CD14-positive monocyte (primary cell): ENCODE measurements at regions of chrX and their contacts with region 1.

Region 1: GRCh38 chrX:53631156-53631555 is 55.4 kb downstream of the HUWE1 start:
- DNase-seq: no peak
- H3K4me3 ChIP-seq: no peak overlapping the region
- H3K4me3 Mint-ChIP-seq: no peak overlapping the region
- H3K27ac ChIP-seq: no peak overlapping the region
- H3K27ac Mint-ChIP-seq: no peak overlapping the region
- H3K4me1 ChIP-seq: no peaks in the 10 kb centered on the region
- H3K4me1 Mint-ChIP-seq: no peaks in the 10 kb centered on the region
- H3K27me3 ChIP-seq: peaks cover 0 to 5% of the 10 kb centered on the region in 2 donors
- H3K27me3 Mint-ChIP-seq: peaks cover 0 to 3% (median 0%) of the 10 kb centered on the region in 3 donors
- CTCF ChIP-seq: no peak

Region 2: DNA sequence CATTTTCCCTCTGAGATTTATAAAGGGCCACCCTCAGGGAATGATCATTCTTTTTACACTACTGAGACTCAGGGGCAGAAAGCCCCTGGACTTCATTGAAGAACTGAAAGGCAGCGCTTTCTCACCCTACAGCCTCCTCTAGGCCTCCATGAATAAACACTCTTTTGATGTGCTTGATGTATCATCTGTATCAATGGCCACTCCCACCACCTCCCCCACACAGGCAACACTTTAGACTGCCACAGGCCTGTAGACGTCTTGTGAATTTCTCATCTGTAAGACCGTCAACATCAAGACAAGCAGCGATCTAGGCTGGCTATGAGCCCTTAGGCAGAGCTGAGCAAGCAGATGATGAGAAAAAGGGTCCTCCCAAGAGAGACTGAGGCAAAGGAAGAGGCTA is 67.8 kb before region 1 on chrX:
- intact Hi-C with region 1: loop called in 1 of 2 experiments (anchors 10 kb)
- DNase-seq: no peak
- H3K4me3 ChIP-seq: no peak overlapping the region
- H3K4me3 Mint-ChIP-seq: no peak overlapping the region
- H3K27ac ChIP-seq: no peak overlapping the region
- H3K27ac Mint-ChIP-seq: no peak overlapping the region
- H3K4me1 ChIP-seq: no peaks in the 10 kb centered on the region
- H3K4me1 Mint-ChIP-seq: no peaks in the 10 kb centered on the region
- H3K27me3 ChIP-seq: no peaks in the 10 kb centered on the region
- H3K27me3 Mint-ChIP-seq: peaks cover 0 to 12% (median 0%) of the 10 kb centered on the region in 3 donors
- CTCF ChIP-seq: no peak